ENCODE measurements at regions of chr21 and their contacts with region 1.

Region 1: DNA sequence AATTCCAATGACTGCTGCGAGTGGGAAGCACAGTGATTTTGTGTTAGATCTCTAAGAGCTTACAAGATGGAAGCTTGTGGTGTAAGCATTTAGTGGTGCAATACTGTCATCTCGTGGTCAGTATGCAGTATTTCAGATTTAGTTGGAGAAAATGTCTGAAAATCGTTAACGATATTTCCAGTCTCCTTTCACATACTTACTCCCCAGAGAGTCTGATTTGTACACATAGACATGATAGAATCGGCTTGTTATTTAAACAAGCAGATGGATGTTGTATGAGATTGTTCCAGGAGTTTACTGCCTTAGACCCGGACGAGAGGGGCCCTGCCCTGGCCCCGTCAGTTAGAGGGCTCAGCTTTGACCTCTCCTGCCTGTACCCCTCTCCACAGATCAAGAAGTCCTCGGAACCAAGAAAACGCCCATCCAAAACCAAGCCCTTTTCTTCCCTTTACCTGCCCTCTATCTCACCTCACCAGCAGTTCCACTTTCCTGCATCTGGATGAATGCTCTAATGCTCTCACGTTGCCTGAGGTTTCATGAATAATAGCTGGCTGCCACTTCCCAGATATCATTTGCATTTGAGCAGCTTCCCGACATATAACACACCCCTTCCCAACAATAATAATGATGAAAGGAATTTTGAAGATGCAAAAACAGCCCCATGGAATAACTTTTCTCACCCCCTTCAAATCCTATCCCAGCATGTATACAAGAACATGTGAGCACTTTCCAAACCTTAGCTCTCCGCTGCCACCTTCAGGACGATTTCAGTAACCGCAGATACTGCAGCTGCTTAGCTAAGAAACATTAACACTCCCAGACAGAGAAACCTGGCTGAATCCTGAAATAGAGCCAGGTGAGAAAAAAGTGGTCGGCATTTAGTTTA is 247.3 kb downstream of the LTN1 start:
- DNase-seq: peak; percentile 84
- ATAC-seq: peak; percentile 90
- H3K4me3 Mint-ChIP-seq: no peak overlapping the region
- H3K27ac Mint-ChIP-seq: no peak overlapping the region
- H3K4me1 Mint-ChIP-seq: no peaks in the 10 kb centered on the region
- H3K27me3 Mint-ChIP-seq: no peaks in the 10 kb centered on the region

Region 2: DNA sequence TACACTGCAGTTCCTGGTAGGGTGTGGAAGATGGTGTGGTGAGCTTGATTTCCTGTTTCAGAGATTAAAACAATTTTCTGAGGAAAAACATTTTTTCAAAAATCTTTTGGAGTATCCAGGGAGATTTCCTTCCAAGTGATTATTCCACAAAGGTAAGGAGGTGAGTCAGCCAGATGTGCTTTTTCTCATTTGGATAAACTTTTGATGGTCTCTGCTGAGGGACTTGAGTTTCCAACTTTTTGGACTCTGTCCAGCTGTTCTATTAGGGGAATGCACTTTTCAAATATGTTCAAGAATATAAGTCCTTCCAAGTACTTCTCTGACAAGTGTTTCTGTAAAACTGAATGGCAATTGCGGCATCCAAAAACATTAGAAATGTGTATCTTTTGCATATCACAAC is 1149.7 kb before region 1 on chr21:
- CTCF ChIA-PET with region 1: no interaction called
- POLR2A ChIA-PET with region 1: no interaction called
- intact Hi-C with region 1: no loop called
- DNase-seq: no peak
- ATAC-seq: no peak
- H3K4me3 Mint-ChIP-seq: no peak overlapping the region
- H3K27ac Mint-ChIP-seq: no peak overlapping the region
- H3K4me1 Mint-ChIP-seq: no peaks in the 10 kb centered on the region
- H3K27me3 Mint-ChIP-seq: peaks cover 1% of the 10 kb centered on the region

Region 3: GRCh38 chr21:28336314-28336713 is 409.1 kb before region 1 on chr21:
- CTCF ChIA-PET with region 1: interaction called, 5 read pairs
- POLR2A ChIA-PET with region 1: no interaction called
- intact Hi-C with region 1: loop called in 1 of 2 experiments (anchors 5 kb)
- DNase-seq: no peak
- ATAC-seq: no peak
- H3K4me3 Mint-ChIP-seq: no peak overlapping the region
- H3K27ac Mint-ChIP-seq: no peak overlapping the region
- H3K4me1 Mint-ChIP-seq: no peaks in the 10 kb centered on the region
- H3K27me3 Mint-ChIP-seq: no peaks in the 10 kb centered on the region

Region 4: DNA sequence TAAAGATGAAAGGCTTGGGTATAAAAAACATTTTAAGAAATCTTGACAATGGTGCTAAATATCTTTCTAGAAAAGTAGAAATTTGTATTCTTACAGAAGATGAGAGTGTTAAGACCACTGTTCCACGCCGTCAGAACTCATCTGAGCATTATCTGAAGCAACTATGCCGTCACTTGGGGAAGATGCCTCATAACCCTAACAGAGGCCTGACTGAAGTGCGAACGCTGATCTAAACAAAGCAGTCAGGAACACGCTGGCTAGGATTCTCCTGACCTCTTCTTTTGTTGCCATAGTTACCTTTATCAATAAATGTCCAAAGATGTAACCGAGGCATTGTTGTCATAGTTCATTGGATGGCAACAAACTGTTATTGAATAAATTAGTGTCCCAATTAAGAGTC is 365.1 kb before region 1 on chr21:
- CTCF ChIA-PET with region 1: no interaction called
- POLR2A ChIA-PET with region 1: no interaction called
- intact Hi-C with region 1: no loop called
- DNase-seq: no peak
- ATAC-seq: no peak
- H3K4me3 Mint-ChIP-seq: no peak overlapping the region
- H3K27ac Mint-ChIP-seq: no peak overlapping the region
- H3K4me1 Mint-ChIP-seq: no peaks in the 10 kb centered on the region
- H3K27me3 Mint-ChIP-seq: no peaks in the 10 kb centered on the region

Region 5: DNA sequence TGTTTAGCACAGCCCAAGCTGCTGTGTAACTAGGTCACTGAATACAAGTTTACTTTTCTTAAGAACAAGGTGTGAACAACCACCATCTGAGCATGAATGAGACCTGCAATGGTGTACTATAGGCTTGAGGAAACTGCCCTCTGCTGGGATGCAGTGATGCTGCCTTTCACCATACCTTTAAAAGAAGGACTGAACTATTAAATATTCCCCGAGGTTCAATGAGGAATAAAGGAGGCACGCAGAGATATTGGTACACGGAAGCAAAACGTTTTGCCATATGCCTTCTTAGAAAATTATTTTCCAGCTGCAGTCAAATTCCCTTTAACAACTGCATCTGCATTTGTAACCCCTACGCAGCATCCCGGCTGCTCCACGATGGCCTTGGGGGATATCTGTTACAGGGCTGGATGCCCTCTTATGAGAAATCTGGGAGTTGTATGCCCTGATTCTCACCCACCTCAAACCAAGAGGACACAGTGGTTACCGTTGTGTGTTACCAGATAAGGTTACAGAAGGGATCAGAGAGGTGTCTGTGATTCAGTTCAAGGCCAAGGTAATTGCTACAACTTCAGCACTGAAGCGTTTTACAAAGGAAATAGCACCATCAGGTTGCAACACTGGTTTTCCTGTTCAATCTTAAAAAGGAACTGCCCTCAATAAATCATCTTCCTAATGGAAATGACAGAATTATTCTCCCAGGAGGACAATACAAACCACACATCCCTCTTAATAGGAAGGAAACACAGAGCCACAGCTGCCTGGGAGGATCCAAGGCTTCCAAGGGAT is 223.2 kb before region 1 on chr21:
- CTCF ChIA-PET with region 1: interaction called, 153 read pairs
- POLR2A ChIA-PET with region 1: interaction called, 3 read pairs
- intact Hi-C with region 1: loop called (anchors 1 kb)
- DNase-seq: peak; percentile 19
- ATAC-seq: peak; percentile 57
- H3K4me3 Mint-ChIP-seq: no peak overlapping the region
- H3K27ac Mint-ChIP-seq: no peak overlapping the region
- H3K4me1 Mint-ChIP-seq: no peaks in the 10 kb centered on the region
- H3K27me3 Mint-ChIP-seq: peaks cover 2% of the 10 kb centered on the region

Region 6: DNA sequence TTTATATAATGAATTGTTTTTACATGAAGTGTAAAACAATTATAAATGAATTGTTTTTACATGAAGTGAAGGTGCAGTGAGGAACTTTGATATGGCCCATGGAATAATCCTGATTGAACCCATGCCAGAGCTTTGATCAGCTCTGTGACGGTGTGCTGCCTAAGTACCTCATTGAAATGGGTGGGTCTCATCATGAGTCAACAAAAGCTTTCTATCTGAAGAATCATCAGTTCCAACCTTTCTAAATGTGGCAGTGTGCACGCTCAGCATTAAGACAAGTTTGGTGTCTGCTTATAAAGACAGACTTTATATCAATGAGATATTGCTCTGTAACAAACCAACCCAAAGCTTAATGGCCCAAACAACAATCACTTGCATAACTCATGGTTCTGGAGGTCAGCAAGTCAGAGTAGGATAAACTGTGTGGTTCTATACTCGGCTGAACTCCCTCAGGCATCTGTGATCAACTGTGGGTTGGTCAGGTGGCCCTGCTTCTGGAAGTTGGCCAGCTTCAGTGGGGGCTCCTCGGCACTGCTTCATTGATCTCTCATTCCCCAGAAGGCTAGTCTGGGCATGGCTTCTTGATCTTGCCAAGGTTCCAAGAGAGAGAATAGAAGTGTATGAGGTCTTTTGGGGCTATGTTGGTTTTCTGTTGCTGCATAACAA is 10.7 kb before region 1 on chr21:
- CTCF ChIA-PET with region 1: interaction called, 30 read pairs
- POLR2A ChIA-PET with region 1: no interaction called
- intact Hi-C with region 1: no loop called
- DNase-seq: no peak
- ATAC-seq: no peak
- H3K4me3 Mint-ChIP-seq: no peak overlapping the region
- H3K27ac Mint-ChIP-seq: no peak overlapping the region
- H3K4me1 Mint-ChIP-seq: peaks cover 7% of the 10 kb centered on the region
- H3K27me3 Mint-ChIP-seq: no peaks in the 10 kb centered on the region

Region 7: GRCh38 chr21:28779914-28780313 is 34.5 kb after region 1 on chr21:
- CTCF ChIA-PET with region 1: interaction called, 13 read pairs
- POLR2A ChIA-PET with region 1: no interaction called
- intact Hi-C with region 1: no loop called
- DNase-seq: no peak
- ATAC-seq: no peak
- H3K4me3 Mint-ChIP-seq: no peak overlapping the region
- H3K27ac Mint-ChIP-seq: no peak overlapping the region
- H3K4me1 Mint-ChIP-seq: peaks cover 17% of the 10 kb centered on the region
- H3K27me3 Mint-ChIP-seq: no peaks in the 10 kb centered on the region

Region 8: DNA sequence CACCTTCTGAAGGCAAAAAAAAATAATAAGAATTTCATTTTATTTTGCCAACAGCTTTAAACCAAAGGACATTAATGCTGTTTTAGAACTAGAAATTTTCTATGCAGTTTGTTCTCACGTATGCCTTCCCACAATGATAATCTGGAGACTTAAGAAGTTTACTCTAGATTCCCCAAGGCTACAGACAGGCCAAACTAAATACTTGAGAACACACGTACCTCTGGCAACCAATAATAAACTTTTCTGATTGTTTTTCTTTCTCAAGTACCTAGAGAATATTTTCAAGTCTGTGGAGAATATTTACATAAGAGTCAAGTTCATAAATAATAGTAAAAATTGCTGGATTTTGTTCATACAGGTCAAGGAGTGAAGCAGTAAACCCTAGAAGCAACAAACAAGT is 1454.6 kb after region 1 on chr21:
- CTCF ChIA-PET with region 1: no interaction called
- POLR2A ChIA-PET with region 1: no interaction called
- intact Hi-C with region 1: no loop called
- DNase-seq: no peak
- ATAC-seq: no peak
- H3K4me3 Mint-ChIP-seq: no peak overlapping the region
- H3K27ac Mint-ChIP-seq: no peak overlapping the region
- H3K4me1 Mint-ChIP-seq: no peaks in the 10 kb centered on the region
- H3K27me3 Mint-ChIP-seq: no peaks in the 10 kb centered on the region